ENCODE measurements at regions of chr7 and their contacts with region 1.

Region 1: GRCh38 chr7:17444673-17445072 is 146.2 kb downstream of the AHR start:
- DNase-seq: peak; percentile 57
- H3K4me3 ChIP-seq: no peak overlapping the region
- H3K27ac ChIP-seq: no peak overlapping the region
- H3K4me1 ChIP-seq: peaks cover 6% of the 10 kb centered on the region
- H3K27me3 ChIP-seq: no peaks in the 10 kb centered on the region
- CTCF ChIP-seq: no peak

Region 2: DNA sequence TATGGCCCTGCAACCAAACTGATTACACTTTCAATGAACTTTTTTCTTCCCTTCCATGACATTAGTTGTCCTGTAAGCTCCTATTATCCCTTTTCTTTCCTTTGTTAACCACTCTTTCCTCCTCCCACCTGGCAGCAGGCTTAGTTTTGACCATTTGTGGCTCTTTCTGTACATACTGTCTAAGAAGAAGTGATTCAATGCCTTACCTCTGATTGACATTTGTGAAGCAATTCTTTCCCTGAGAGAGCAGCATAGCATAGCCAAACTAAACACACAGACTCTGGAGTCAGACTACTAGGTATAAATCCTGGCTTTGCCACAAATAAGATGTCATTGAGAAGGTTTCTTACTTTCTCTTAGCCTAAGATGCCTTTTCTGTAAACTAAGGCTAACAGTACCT is 97.3 kb before region 1 on chr7:
- CTCF ChIA-PET with region 1: no interaction called
- dilution Hi-C with region 1: no loop called
- in situ Hi-C with region 1: no loop called
- intact Hi-C with region 1: no loop called
- DNase-seq: no peak
- H3K4me3 ChIP-seq: no peak overlapping the region
- H3K27ac ChIP-seq: no peak overlapping the region
- H3K4me1 ChIP-seq: no peaks in the 10 kb centered on the region
- H3K27me3 ChIP-seq: no peaks in the 10 kb centered on the region
- CTCF ChIP-seq: no peak

Region 3: DNA sequence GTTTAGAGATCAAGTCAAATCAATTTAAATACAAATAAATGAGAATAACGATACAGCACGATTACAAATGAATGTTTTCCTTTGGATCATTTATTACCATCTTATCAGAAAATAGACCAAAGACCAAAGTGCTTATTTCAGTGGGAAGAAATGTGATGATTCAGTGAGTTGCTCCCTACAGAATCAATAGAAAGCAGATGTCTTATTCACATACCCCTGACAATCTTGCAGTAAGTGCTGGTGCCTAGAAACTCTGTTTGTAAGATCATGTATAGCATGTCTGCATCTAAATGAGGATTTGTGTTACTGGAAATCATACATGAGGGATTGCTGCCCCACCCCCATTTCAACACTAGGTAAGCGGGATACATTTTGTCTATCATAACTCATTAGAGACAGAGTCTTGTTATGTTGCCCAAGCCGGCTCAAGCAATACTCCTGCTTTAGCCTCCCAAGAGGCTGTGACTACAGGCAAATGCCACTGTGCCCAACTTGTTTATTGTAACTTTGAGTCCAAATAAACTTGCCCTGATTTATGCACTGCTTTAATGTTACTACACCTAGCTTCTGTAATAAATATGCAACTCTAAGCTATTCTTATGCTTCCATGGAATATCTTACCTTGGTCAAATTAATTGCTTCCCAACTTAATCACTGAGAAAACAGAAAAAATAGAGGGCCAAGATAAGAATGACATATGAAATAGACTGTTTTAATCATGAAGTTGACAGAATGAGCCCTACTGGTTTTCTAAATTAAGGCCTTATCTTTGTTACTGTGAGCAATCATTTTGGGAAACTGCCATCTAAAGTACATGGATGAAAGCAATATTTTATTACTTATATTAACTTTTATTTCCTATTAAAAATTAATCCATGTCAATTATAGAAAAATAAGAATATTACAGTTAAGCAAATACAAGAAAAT is 63.7 kb before region 1 on chr7:
- CTCF ChIA-PET with region 1: no interaction called
- dilution Hi-C with region 1: no loop called
- in situ Hi-C with region 1: no loop called
- intact Hi-C with region 1: loop called (anchors 10 kb)
- DNase-seq: no peak
- H3K4me3 ChIP-seq: no peak overlapping the region
- H3K27ac ChIP-seq: no peak overlapping the region
- H3K4me1 ChIP-seq: peaks cover 5% of the 10 kb centered on the region
- H3K27me3 ChIP-seq: no peaks in the 10 kb centered on the region
- CTCF ChIP-seq: no peak